GM13977 (cell line): ENCODE measurements at regions of chr10 and their contacts with region 1.

Region 1: GRCh38 chr10:89369156-89370105 is 8.4 kb upstream of the IFIT1B start:
- DNase-seq: peak; percentile 50
- CTCF ChIP-seq: peak; percentile 69

Region 2: DNA sequence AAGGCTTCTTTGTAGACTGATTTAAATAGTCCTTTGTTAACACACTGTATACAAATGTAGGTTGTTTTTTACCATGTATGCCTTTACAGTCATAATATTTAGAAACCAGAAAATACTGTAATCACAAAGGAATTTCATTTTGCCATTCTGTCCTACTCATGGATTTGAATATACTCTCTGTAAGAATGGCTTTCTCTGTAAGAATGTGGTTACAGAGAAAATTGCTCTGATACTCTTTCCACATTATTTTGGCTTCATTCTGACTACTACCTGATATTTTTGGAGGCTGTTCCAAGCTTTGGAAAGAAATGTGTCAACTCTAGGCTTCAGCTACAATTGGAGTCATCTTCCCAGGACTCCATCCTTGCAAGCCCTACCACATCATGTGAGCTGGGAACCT is 185.9 kb before region 1 on chr10:
- in situ Hi-C with region 1: no loop called
- DNase-seq: no peak
- CTCF ChIP-seq: no peak

Region 3: GRCh38 chr10:89278034-89278535 is 91.3 kb before region 1 on chr10:
- in situ Hi-C with region 1: loop called (anchors 10 kb)
- DNase-seq: no peak
- CTCF ChIP-seq: no peak

Region 4: GRCh38 chr10:90530521-90530920 is 1161.1 kb after region 1 on chr10:
- in situ Hi-C with region 1: no loop called
- DNase-seq: no peak
- CTCF ChIP-seq: no peak